Activated CD4-positive, alpha-beta memory T cell treated with anti-CD3 and anti-CD28 coated beads, Interleukin-2, amount 10 ng/mL, durations not matched to agents 7 days and 5 days (primary cell): ENCODE measurements at regions of chr1 and their contacts with region 1.

Region 1: GRCh38 chr1:92960395-92961130 is 699 bp downstream of the DIPK1A start:
- DNase-seq: peak; percentile 73
- H3K4me3 Mint-ChIP-seq: peak overlapping the region; percentile 94
- H3K27ac Mint-ChIP-seq: peak overlapping the region; percentile 93
- H3K4me1 Mint-ChIP-seq: peaks cover 40% of the 10 kb centered on the region
- H3K27me3 Mint-ChIP-seq: no peaks in the 10 kb centered on the region

Region 2: GRCh38 chr1:92837062-92837461 is 123.5 kb before region 1 on chr1:
- CTCF ChIA-PET with region 1: interaction called, 33 read pairs
- POLR2A ChIA-PET with region 1: interaction called, 54 read pairs
- DNase-seq: no peak
- H3K4me3 Mint-ChIP-seq: no peak overlapping the region
- H3K27ac Mint-ChIP-seq: peak overlapping the region; percentile 47
- H3K4me1 Mint-ChIP-seq: peaks cover 80% of the 10 kb centered on the region
- H3K27me3 Mint-ChIP-seq: no peaks in the 10 kb centered on the region

Region 3: GRCh38 chr1:92877792-92878191 is 82.8 kb before region 1 on chr1:
- CTCF ChIA-PET with region 1: interaction called, 10 read pairs
- POLR2A ChIA-PET with region 1: interaction called, 24 read pairs
- DNase-seq: no peak
- H3K4me3 Mint-ChIP-seq: peak overlapping the region; percentile 5
- H3K27ac Mint-ChIP-seq: peak overlapping the region; percentile 64
- H3K4me1 Mint-ChIP-seq: peaks cover 28% of the 10 kb centered on the region
- H3K27me3 Mint-ChIP-seq: no peaks in the 10 kb centered on the region

Region 4: GRCh38 chr1:92980732-92981647 is 20.4 kb after region 1 on chr1:
- CTCF ChIA-PET with region 1: interaction called, 60 read pairs
- POLR2A ChIA-PET with region 1: interaction called, 259 read pairs
- DNase-seq: peak; percentile 62
- H3K4me3 Mint-ChIP-seq: peak overlapping the region; percentile 59
- H3K27ac Mint-ChIP-seq: peak overlapping the region; percentile 97
- H3K4me1 Mint-ChIP-seq: peaks cover 58% of the 10 kb centered on the region
- H3K27me3 Mint-ChIP-seq: no peaks in the 10 kb centered on the region

Region 5: DNA sequence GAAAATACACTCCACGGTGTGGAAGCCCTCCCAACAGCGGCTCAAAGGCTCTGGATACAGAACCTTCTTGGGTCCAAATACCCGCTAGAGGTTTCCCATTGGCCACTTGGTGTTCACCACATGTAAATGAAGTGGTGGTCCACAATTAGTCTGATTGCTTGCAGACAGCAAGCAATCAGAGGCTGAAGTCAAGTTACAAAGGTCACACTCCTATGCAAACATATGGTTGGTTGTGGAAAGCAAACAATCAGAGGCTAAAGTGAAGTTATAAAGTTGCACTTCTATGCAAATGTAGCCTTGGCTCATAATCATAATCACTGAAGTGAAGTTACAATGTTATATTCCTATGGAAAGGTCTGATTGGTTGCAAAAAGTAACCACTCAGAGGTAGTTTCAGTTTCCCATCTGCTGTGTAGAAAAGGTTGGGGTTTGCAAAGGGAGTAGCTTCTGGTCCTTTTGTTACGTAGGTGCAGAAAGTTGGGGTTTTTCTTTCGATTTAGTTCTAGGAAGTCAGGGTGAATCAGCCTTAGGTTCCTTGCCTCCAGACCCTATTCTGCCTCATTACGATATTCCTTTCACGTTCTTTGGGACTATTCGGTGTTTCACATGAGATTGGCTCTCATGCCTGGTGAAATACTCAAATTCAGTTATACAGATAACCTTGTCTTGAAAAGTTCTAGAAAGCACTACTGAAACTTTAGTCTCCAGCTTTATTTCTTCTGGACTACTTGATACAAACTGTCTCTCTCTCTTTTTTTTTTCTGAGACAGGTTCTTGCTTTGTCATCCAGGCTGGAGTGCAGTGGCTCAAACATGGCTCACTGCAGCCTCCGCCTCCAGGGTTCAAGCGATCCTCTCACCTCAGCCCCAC is 81.9 kb after region 1 on chr1:
- CTCF ChIA-PET with region 1: interaction called, 5 read pairs
- POLR2A ChIA-PET with region 1: interaction called, 11 read pairs
- DNase-seq: peak; percentile 35
- H3K4me3 Mint-ChIP-seq: peak overlapping the region; percentile 70
- H3K27ac Mint-ChIP-seq: peak overlapping the region; percentile 90
- H3K4me1 Mint-ChIP-seq: peaks cover 39% of the 10 kb centered on the region
- H3K27me3 Mint-ChIP-seq: no peaks in the 10 kb centered on the region

Region 6: GRCh38 chr1:93171549-93172034 is 211.0 kb after region 1 on chr1:
- CTCF ChIA-PET with region 1: no interaction called
- POLR2A ChIA-PET with region 1: no interaction called
- DNase-seq: no peak
- H3K4me3 Mint-ChIP-seq: peak overlapping the region; percentile 71
- H3K27ac Mint-ChIP-seq: peak overlapping the region; percentile 77
- H3K4me1 Mint-ChIP-seq: peaks cover 59% of the 10 kb centered on the region
- H3K27me3 Mint-ChIP-seq: no peaks in the 10 kb centered on the region

Region 7: GRCh38 chr1:93345633-93346420 is 385.3 kb after region 1 on chr1 and contains the start of gene DR1:
- CTCF ChIA-PET with region 1: interaction called, 3 read pairs
- POLR2A ChIA-PET with region 1: interaction called, 12 read pairs
- DNase-seq: peak; percentile 92
- H3K4me3 Mint-ChIP-seq: peak within 1 kb of the TSS; percentile 99
- H3K27ac Mint-ChIP-seq: peak within 1 kb of the TSS; percentile 97
- H3K4me1 Mint-ChIP-seq: peaks cover 26% of the 10 kb centered on the region
- H3K27me3 Mint-ChIP-seq: no peaks in the 10 kb centered on the region
- total RNA-seq, gene DR1: 100 to 104 TPM